Calu3 (cell line): ENCODE measurements at regions of chr9 and their contacts with region 1.

Region 1: GRCh38 chr9:109469646-109470358 is 28.3 kb downstream of the PTPN3 start:
- DNase-seq: peak; percentile 74
- H3K4me3 Mint-ChIP-seq: peak overlapping the region; percentile 63
- H3K27ac Mint-ChIP-seq: peak overlapping the region; percentile 92
- H3K4me1 Mint-ChIP-seq: peaks cover 57% of the 10 kb centered on the region
- H3K27me3 Mint-ChIP-seq: no peaks in the 10 kb centered on the region
- CTCF ChIP-seq: peak; percentile 76

Region 2: GRCh38 chr9:109440797-109441287 is 29.0 kb before region 1 on chr9:
- CTCF ChIA-PET with region 1: interaction called, 18 read pairs
- intact Hi-C with region 1: loop called (anchors 2 kb)
- DNase-seq: peak; percentile 58
- H3K4me3 Mint-ChIP-seq: no peak overlapping the region
- H3K27ac Mint-ChIP-seq: peak overlapping the region; percentile 85
- H3K4me1 Mint-ChIP-seq: peaks cover 11% of the 10 kb centered on the region
- H3K27me3 Mint-ChIP-seq: no peaks in the 10 kb centered on the region
- CTCF ChIP-seq: peak; percentile 54

Region 3: GRCh38 chr9:109453210-109453842 is 16.5 kb before region 1 on chr9:
- CTCF ChIA-PET with region 1: interaction called, 10 read pairs
- intact Hi-C with region 1: no loop called
- DNase-seq: no peak
- H3K4me3 Mint-ChIP-seq: no peak overlapping the region
- H3K27ac Mint-ChIP-seq: peak overlapping the region; percentile 61
- H3K4me1 Mint-ChIP-seq: peaks cover 27% of the 10 kb centered on the region
- H3K27me3 Mint-ChIP-seq: no peaks in the 10 kb centered on the region
- CTCF ChIP-seq: no peak

Region 4: GRCh38 chr9:109498195-109499092 is 28.6 kb after region 1 on chr9 and contains the start of gene PTPN3:
- CTCF ChIA-PET with region 1: interaction called, 10 read pairs
- intact Hi-C with region 1: no loop called
- DNase-seq: peak; percentile 48
- H3K4me3 Mint-ChIP-seq: peak within 1 kb of the TSS; percentile 73
- H3K27ac Mint-ChIP-seq: peak within 1 kb of the TSS; percentile 71
- H3K4me1 Mint-ChIP-seq: peaks cover 22% of the 10 kb centered on the region
- H3K27me3 Mint-ChIP-seq: no peaks in the 10 kb centered on the region
- CTCF ChIP-seq: no peak
- total RNA-seq, gene PTPN3: 25.0 and 28.3 TPM in 2 replicates

Region 5: DNA sequence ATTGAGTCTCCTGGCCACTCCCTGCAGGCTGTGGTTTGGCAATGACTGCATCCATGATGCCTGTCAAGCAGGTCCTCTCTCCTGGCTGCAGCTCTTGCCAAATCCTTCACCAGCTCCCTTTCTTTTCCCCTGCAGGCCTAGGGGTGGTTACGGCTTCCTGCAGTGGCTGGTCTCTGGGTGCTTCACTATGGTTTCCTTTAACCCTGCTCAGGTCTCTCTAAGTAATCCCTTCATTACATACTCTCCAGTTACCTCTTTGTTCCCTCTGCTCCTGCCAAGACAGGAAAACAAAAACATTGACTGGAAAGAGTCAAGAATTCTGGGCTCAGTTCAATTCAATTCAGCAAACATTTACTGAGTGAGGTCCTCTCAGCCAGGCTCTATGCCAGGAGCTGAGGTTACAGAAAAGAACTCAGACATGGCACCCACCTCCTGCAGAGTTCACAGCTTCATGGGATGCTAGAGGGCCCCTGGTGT is 48.1 kb after region 1 on chr9:
- CTCF ChIA-PET with region 1: interaction called, 3 read pairs
- intact Hi-C with region 1: loop called (anchors 2 kb)
- DNase-seq: no peak
- H3K4me3 Mint-ChIP-seq: no peak overlapping the region
- H3K27ac Mint-ChIP-seq: no peak overlapping the region
- H3K4me1 Mint-ChIP-seq: peaks cover 21% of the 10 kb centered on the region
- H3K27me3 Mint-ChIP-seq: no peaks in the 10 kb centered on the region
- CTCF ChIP-seq: no peak